AG04449 (cell line): ENCODE measurements at regions of chr9 and their contacts with region 1.

Region 1: DNA sequence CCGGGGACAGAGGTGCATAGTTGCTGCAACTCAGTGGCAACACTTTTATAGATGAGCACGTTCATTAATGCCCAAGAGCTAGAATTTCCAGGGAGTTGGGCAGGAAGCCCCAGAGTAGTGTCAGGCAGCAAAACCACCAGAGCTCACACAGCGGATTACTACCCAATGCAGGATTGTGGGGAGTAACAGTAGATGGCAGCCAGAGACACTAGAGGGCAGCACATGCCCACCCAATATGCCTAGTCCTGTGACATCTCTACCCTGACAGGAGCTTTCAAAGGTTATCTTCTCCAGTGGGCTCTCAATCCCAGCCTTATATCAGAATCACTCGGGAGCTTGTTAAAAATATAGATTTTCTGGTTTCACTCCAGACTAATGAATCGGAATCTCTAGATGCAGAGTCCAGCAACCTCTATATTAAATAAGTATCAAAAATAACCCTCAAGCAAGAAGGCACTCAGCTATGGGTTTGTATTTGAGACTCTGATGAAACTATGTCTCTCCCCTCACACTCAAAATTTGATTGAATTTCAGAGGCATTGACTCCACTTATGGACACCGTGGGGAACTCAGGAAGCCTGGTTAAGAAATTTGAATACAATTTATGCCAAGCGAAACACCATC is 58.4 kb upstream of the PHF24 start:
- DNase-seq: no peak
- H3K4me3 ChIP-seq: no peak overlapping the region
- CTCF ChIP-seq: peak; percentile 83

Region 2: GRCh38 chr9:34983209-34983608 is 83.6 kb after region 1 on chr9:
- CTCF ChIA-PET with region 1: interaction called, 54 read pairs
- POLR2A ChIA-PET with region 1: no interaction called
- DNase-seq: no peak
- H3K4me3 ChIP-seq: no peak overlapping the region
- CTCF ChIP-seq: no peak

Region 3: DNA sequence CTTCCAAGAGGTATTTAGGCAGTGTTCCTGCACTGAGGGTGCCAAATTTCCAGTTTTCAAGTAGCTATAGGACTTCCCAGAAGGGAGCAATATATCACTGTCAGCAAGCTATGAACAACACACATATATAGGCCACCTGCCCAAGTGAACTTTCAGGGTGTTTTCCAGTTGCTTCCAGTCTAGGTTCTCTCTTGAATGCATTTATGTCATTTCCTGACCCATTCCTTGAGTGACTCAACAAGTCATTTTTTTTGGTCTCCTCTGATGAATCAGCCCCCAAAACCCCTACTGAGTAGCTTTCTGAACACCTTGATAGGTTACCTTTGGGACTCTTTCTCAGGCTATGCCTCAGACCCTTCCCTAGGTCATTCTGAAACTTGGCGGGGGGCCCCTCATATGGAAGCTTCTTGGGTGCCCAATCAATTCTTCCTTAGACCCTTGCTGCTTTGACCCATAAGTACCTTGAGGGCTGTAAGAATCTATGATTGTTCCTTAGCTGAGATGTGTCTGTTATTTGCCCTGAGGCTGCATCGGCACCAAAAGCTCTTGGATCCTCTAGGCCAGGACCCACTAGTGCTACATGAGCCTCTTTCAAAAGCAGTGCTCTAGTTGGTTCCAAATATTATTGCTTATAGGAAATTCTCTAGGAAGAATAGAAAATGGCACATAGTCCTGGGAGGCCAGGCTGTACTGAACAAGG is 102.3 kb after region 1 on chr9:
- CTCF ChIA-PET with region 1: interaction called, 11 read pairs
- POLR2A ChIA-PET with region 1: no interaction called
- DNase-seq: no peak
- H3K4me3 ChIP-seq: no peak overlapping the region
- CTCF ChIP-seq: no peak

Region 4: DNA sequence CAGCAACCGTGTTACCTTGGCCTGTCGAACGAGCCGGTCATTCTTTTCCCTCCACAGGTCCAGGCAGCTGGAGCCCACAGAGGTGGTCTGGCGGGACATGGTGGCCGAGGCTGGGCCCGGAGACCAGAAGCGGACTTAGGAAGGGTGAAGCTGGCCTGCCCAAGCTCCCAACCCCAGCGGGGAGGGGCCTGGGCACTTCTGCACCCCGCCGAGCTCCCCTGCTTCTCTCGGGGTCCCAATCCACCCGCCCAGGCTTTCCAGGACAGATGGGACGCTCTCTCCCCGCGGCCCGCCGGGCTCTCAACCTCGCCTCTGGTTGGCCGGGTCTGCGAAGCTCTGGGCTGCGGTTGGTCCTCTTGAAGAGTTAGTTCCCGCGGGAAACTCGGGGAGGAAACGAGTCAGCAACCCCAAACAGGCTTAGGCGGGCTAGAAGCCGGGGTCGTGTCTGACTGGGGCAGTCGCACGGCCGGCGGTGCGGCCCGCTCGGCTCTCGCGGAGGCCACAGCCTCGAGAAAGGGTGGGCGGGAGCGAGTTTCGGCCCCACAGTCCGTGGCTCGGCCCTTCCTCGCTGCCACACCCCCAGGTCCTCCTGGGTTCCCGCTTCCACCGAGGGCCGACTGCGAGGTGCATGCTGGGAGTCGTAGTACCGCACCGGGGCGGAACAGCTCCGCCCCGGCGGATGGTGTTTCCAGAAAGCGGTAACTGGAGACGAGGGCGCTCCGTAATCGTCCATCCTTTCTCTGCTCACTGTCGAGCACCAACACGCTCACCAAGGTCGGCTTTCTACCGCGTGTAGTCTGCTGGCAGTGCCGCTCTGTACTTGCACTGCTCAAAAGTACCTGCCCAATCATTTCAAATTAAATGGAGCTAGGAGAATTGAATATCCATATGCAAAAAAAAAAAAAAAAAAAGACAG is 180.0 kb after region 1 on chr9 and contains the start of gene FANCG:
- CTCF ChIA-PET with region 1: interaction called, 16 read pairs
- POLR2A ChIA-PET with region 1: no interaction called
- DNase-seq: peak; percentile 57
- H3K4me3 ChIP-seq: peak within 1 kb of the TSS; percentile 89
- CTCF ChIP-seq: no peak

Region 5: GRCh38 chr9:35111001-35111933 is 211.6 kb after region 1 on chr9:
- CTCF ChIA-PET with region 1: interaction called, 16 read pairs
- POLR2A ChIA-PET with region 1: no interaction called
- DNase-seq: peak; percentile 90
- H3K4me3 ChIP-seq: peak overlapping the region; percentile 88
- CTCF ChIP-seq: no peak

Region 6: GRCh38 chr9:35481347-35481975 is 581.8 kb after region 1 on chr9:
- CTCF ChIA-PET with region 1: interaction called, 41 read pairs
- POLR2A ChIA-PET with region 1: no interaction called
- DNase-seq: no peak
- H3K4me3 ChIP-seq: no peak overlapping the region
- CTCF ChIP-seq: peak; percentile 74